Activated CD8-positive, alpha-beta T cell treated with anti-CD3 and anti-CD28 coated beads for 36 hours (primary cell): ENCODE measurements at regions of chr7 and their contacts with region 1.

Region 1: GRCh38 chr7:139602143-139602722 is 78.7 kb downstream of the CLEC2L start:
- DNase-seq: no peak
- ATAC-seq: peak; percentile 74
- H3K4me3 Mint-ChIP-seq: no peak overlapping the region
- H3K27ac Mint-ChIP-seq: no peak overlapping the region
- H3K4me1 Mint-ChIP-seq: no peaks in the 10 kb centered on the region
- H3K27me3 Mint-ChIP-seq: no peaks in the 10 kb centered on the region
- CTCF ChIP-seq: peak; percentile 69

Region 2: DNA sequence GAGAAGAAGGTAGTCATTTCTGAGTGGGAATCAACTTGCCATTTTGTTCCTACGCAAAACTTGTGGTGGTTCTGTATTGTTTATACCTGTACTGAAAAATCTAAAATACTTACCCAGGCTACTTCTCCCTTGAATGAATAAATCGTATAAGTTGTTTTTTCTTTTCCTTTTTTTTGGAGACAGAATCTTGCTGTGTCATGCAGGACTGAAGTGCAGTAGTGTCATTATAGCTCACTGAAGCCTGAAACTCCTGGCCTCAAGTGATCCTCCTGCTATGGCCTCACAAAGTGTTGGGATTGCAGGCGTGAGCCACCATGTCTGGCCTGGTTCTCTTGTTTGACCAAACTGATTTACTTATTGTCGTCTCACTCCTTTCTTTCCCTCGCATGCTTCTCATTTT is 214.6 kb before region 1 on chr7:
- CTCF ChIA-PET with region 1: no interaction called
- POLR2A ChIA-PET with region 1: no interaction called
- intact Hi-C with region 1: no loop called
- DNase-seq: no peak
- ATAC-seq: no peak
- H3K4me3 Mint-ChIP-seq: no peak overlapping the region
- H3K27ac Mint-ChIP-seq: peak overlapping the region; percentile 14
- H3K4me1 Mint-ChIP-seq: peaks cover 12% of the 10 kb centered on the region
- H3K27me3 Mint-ChIP-seq: no peaks in the 10 kb centered on the region
- CTCF ChIP-seq: no peak

Region 3: GRCh38 chr7:139502226-139502625 is 100.0 kb before region 1 on chr7:
- CTCF ChIA-PET with region 1: interaction called, 10 read pairs
- POLR2A ChIA-PET with region 1: no interaction called
- intact Hi-C with region 1: no loop called
- DNase-seq: no peak
- ATAC-seq: no peak
- H3K4me3 Mint-ChIP-seq: no peak overlapping the region
- H3K27ac Mint-ChIP-seq: no peak overlapping the region
- H3K4me1 Mint-ChIP-seq: peaks cover 2% of the 10 kb centered on the region
- H3K27me3 Mint-ChIP-seq: peaks cover 2% of the 10 kb centered on the region
- CTCF ChIP-seq: no peak

Region 4: DNA sequence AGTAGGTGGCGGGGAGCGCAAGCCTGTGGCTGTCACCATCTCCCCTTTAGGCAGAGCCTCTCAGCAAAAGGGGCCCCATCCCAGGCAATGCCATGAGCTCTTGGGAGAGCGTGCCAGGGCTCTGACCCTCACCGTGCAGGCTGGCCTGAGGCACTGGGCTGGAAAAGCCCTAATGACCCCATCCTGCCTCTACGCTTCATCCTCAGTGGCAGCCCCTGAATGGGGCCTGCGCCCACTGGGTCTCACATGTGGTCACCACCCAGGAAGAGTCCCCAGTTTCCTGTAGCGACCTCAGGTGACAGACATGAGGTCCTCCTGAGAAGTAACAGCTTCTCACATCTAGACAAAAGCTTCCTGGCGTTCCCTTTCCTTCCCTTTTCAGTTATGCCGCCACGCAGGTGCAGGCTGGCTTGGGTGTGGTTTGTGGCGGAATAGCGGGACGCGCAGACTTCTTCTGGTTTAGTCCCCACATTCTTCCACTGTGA is 19.5 kb before region 1 on chr7:
- CTCF ChIA-PET with region 1: interaction called, 12 read pairs
- POLR2A ChIA-PET with region 1: interaction called, 5 read pairs
- intact Hi-C with region 1: no loop called
- DNase-seq: peak; percentile 17
- ATAC-seq: no peak
- H3K4me3 Mint-ChIP-seq: no peak overlapping the region
- H3K27ac Mint-ChIP-seq: no peak overlapping the region
- H3K4me1 Mint-ChIP-seq: peaks cover 11% of the 10 kb centered on the region
- H3K27me3 Mint-ChIP-seq: no peaks in the 10 kb centered on the region
- CTCF ChIP-seq: no peak

Region 5: GRCh38 chr7:139588632-139589031 is 13.6 kb before region 1 on chr7:
- CTCF ChIA-PET with region 1: interaction called, 29 read pairs
- POLR2A ChIA-PET with region 1: no interaction called
- intact Hi-C with region 1: no loop called
- DNase-seq: no peak
- ATAC-seq: no peak
- H3K4me3 Mint-ChIP-seq: no peak overlapping the region
- H3K27ac Mint-ChIP-seq: no peak overlapping the region
- H3K4me1 Mint-ChIP-seq: peaks cover 4% of the 10 kb centered on the region
- H3K27me3 Mint-ChIP-seq: no peaks in the 10 kb centered on the region
- CTCF ChIP-seq: no peak

Region 6: DNA sequence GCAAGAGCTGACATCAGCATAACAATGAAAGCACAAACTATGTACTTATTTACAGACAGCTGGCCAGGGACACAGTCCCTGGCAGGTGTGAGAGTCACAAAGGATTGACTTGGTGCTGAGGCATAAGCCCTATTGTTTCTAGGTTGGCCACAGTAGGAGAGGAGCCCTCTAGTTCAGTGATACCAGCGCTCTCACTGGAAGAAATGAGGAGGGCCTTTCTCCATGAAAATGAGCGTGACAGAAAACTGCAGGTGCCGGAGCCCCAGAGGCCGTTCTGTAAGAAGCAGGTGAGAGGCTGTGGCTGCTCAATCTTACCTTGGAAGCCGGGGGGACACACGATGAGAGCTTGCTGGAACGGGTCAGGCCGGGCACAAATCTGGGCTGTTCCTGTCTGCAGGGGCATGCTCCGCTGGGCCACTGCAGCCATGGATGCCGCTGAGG is 11.8 kb after region 1 on chr7:
- CTCF ChIA-PET with region 1: interaction called, 92 read pairs
- POLR2A ChIA-PET with region 1: no interaction called
- intact Hi-C with region 1: no loop called
- DNase-seq: no peak
- ATAC-seq: no peak
- H3K4me3 Mint-ChIP-seq: no peak overlapping the region
- H3K27ac Mint-ChIP-seq: no peak overlapping the region
- H3K4me1 Mint-ChIP-seq: no peaks in the 10 kb centered on the region
- H3K27me3 Mint-ChIP-seq: no peaks in the 10 kb centered on the region
- CTCF ChIP-seq: no peak

Region 7: DNA sequence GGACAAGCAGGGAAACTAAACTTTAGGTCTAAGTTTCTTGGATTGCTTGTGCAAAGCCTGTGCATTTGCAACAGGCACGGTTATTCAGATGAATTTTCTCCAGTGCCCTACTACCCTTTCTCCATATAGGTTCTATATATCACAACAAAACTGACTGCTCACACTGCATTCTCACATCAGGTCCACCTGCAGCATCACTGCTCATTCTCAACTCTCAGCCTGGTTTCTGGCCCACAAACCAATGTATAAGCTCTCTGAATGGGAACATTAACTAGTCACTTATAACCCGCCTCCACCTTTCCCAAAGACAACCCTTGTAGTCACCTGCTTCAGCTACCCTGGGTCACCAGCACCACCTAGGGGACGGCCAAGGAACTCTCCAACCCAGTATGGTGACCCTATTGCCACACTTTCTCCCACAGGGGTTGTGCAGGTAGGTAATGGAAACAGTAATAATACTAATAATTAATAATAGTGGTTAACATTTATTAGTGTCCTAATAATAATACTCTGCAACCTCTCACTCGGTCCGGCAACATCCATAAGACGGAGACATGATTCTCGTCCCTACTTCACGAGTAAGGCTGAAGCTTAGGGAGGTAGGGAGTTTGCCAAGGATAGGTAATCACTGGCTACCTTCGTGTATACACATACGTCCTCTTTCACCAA is 18.6 kb after region 1 on chr7:
- CTCF ChIA-PET with region 1: interaction called, 92 read pairs
- POLR2A ChIA-PET with region 1: no interaction called
- intact Hi-C with region 1: no loop called
- DNase-seq: peak; percentile 72
- ATAC-seq: peak; percentile 90
- H3K4me3 Mint-ChIP-seq: no peak overlapping the region
- H3K27ac Mint-ChIP-seq: no peak overlapping the region
- H3K4me1 Mint-ChIP-seq: peaks cover 17% of the 10 kb centered on the region
- H3K27me3 Mint-ChIP-seq: no peaks in the 10 kb centered on the region
- CTCF ChIP-seq: peak; percentile 77

Region 8: DNA sequence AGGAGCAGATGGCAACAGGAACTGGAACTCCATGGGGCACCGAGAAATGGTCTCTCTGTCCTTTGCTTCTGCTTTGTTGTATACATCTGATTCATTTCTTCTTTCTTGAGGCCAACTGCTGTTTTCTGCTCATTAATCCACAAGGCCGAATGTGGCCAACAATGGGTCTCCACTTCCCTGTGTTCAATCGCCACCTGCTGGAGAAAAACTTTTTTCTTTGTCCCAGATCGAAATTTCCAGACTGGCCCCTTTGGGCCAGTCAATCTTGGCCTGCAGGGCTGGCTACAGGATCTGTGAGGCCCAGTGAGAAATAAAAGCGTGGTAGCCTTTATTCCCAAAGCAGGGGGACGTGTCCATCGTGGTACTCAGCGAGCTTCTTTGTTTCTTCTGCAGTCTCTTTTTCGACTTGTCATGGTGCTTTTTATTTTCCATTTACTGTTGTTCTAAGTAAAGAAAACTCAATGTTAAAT is 401.7 kb after region 1 on chr7:
- CTCF ChIA-PET with region 1: interaction called, 72 read pairs
- POLR2A ChIA-PET with region 1: no interaction called
- intact Hi-C with region 1: loop called (anchors 5 kb)
- DNase-seq: peak; percentile 44
- ATAC-seq: no peak
- H3K4me3 Mint-ChIP-seq: no peak overlapping the region
- H3K27ac Mint-ChIP-seq: no peak overlapping the region
- H3K4me1 Mint-ChIP-seq: no peaks in the 10 kb centered on the region
- H3K27me3 Mint-ChIP-seq: no peaks in the 10 kb centered on the region
- CTCF ChIP-seq: peak; percentile 59